RWPE1 (cell line): ENCODE measurements at regions of chr2 and their contacts with region 1.

Region 1: DNA sequence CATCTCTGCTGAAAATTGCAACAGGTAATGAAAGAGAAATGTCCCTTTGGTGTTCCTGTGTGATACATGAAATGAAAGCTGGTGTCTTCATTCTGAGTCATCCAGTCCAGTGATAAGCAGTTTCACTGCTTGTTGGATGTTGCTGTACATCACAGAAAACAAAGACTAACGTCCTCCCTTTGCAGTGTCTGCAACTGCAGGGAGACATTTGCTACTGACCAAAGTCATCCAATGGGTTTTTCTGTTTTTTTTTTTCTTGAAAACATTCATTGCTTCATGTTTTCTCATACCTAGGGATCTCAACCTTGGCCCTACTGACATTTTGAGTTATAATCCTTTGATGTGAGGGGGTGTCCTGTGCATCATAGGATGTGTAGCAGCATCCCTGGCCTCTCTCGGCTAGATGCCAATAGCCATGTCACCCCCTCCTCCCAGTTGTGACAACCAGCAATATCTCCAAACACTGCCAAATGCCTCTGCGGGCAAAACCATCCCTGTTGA is 63.6 kb upstream of the FZD5 start:
- DNase-seq: no peak
- H3K27ac ChIP-seq: no peak overlapping the region
- CTCF ChIP-seq: no peak

Region 2: GRCh38 chr2:206971805-206972204 is 861.5 kb before region 1 on chr2:
- CTCF ChIA-PET with region 1: no interaction called
- POLR2A ChIA-PET with region 1: interaction called, 10 read pairs
- DNase-seq: no peak
- H3K27ac ChIP-seq: no peak overlapping the region
- CTCF ChIP-seq: no peak